Activated naive CD4-positive, alpha-beta T cell treated with anti-CD3 and anti-CD28 coated beads for 36 hours (primary cell): ENCODE measurements at regions of chr9 and their contacts with region 1.

Region 1: DNA sequence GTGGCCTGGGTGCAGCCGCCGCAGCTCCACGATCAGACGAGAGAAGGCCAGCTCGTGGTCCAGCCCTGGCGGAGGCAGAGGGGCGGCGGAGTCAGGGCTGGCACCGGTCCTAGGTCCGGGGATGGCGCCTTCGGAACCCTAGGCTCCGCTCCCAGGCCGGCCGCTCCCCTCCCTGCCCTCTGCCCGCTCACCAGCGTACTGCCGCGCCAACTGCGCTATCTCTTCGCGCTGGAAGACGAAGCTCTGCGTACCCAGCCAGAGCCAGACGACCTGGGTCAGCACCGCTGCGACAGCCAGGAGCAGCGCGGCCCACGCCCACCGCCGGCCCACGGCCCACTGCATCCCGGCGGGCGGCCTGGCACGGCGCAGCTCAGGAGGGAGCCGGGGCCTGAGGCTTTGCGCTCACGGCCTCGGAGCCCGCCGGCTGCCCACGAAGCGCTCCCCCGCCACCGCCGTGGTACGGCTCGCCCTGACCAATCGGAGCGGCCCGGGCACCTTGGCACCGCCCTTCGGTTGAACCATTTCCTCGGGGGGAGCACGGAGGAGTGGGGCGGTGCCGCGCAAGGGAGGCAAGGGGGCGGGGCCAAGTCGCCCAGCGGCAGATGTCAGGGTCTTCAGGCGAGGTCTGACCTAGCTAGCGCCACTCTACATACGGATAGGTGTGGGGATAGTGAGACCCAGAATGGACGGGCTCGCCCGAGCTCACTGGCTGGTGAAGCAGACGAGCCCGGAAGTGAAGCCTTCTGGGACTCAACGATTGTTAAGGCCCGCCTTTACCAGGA is at the start of gene SIGMAR1:
- DNase-seq: peak; percentile 94
- H3K4me3 Mint-ChIP-seq: peak within 1 kb of the TSS; percentile 92
- H3K27ac Mint-ChIP-seq: peak within 1 kb of the TSS; percentile 89
- H3K4me1 Mint-ChIP-seq: peaks cover 37% of the 10 kb centered on the region
- H3K27me3 Mint-ChIP-seq: no peaks in the 10 kb centered on the region
- total RNA-seq, gene SIGMAR1: 58.9 TPM

Region 2: DNA sequence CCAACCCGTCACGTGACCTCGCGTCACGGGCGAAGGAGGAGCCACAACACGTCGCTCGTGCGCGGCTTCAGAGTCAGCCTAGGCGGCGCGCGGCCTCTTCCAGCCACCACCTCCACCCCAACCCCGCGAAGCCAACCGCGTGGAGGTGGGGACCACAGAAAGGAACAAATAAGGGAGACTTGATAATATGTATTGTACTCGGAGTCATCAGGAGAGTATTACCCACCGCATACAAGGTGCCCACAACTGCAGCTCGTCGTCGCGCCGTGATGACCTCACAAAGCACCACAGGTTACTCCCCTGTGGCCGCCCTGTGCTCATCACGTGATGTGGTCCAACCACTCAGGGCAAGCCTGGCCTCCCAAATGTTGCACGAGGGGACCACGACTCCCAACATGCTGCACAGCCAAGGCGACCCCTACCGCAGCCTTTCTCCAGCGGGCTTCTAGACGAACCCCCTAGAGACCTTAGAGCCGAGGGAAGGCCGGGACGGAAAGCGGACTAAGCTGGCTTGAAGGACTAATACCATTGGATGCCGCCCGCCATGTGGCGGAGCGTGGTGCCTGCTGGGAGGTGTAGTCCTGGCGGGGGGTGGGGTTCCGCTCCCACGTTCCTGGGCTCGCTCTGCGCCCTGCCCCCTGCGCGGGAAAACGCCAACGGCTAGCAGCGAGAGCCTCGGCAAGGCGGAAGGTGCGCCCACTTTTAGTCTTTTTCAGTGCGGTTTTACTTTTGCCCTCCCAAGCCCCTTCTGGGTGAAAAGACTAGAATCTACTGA is 588.4 kb before region 1 on chr9:
- CTCF ChIA-PET with region 1: no interaction called
- intact Hi-C with region 1: loop called (anchors 10 kb)
- DNase-seq: peak; percentile 98
- H3K4me3 Mint-ChIP-seq: peak overlapping the region; percentile 91
- H3K27ac Mint-ChIP-seq: peak overlapping the region; percentile 98
- H3K4me1 Mint-ChIP-seq: peaks cover 33% of the 10 kb centered on the region
- H3K27me3 Mint-ChIP-seq: no peaks in the 10 kb centered on the region

Region 3: GRCh38 chr9:34151398-34151797 is 486.1 kb before region 1 on chr9:
- CTCF ChIA-PET with region 1: no interaction called
- intact Hi-C with region 1: no loop called
- DNase-seq: no peak
- H3K4me3 Mint-ChIP-seq: no peak overlapping the region
- H3K27ac Mint-ChIP-seq: no peak overlapping the region
- H3K4me1 Mint-ChIP-seq: no peaks in the 10 kb centered on the region
- H3K27me3 Mint-ChIP-seq: no peaks in the 10 kb centered on the region

Region 4: GRCh38 chr9:34328987-34329832 is 308.3 kb before region 1 on chr9 and contains the starts of genes KIF24 and NUDT2:
- CTCF ChIA-PET with region 1: interaction called, 3 read pairs
- intact Hi-C with region 1: loop called (anchors 5 kb)
- DNase-seq: peak; percentile 98
- H3K4me3 Mint-ChIP-seq: peak within 1 kb of the TSS; percentile 88
- H3K27ac Mint-ChIP-seq: peak within 1 kb of the TSS; percentile 94
- H3K4me1 Mint-ChIP-seq: peaks cover 42% of the 10 kb centered on the region
- H3K27me3 Mint-ChIP-seq: no peaks in the 10 kb centered on the region
- total RNA-seq, gene KIF24: 4.2 to 4.5 TPM
- total RNA-seq, gene NUDT2: 39.2 to 42.9 TPM

Region 5: DNA sequence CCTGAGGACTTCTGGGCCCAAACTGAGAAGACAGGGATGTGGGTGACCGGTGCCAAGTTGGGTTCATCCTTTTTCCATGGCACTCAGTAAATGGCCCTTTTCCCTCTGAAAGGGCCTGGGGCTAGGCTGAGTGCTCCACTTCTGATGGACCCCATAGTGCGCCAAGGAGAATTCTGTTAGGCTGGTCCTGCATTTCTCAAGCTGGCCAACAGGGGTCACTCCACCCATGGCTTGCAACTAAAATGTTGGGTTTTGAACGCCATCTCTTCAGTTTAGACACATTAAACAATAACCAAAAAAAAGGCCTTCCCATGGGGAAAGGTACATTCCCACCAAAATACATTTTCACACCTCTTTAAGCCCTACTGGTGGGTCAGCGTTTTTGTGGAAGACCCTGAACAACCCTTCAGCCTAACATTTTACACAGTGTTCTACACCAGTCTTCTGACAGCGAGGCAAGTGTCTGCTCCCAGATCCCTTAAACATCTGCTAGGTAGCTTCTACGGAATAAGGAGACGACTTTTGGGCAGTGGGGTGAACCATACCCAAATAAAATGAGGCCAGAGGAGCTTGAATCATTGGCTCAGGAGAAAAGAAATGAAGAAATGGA is 75.3 kb before region 1 on chr9:
- CTCF ChIA-PET with region 1: interaction called, 13 read pairs
- intact Hi-C with region 1: no loop called
- DNase-seq: peak; percentile 50
- H3K4me3 Mint-ChIP-seq: no peak overlapping the region
- H3K27ac Mint-ChIP-seq: no peak overlapping the region
- H3K4me1 Mint-ChIP-seq: no peaks in the 10 kb centered on the region
- H3K27me3 Mint-ChIP-seq: peaks cover 23% of the 10 kb centered on the region

Region 6: DNA sequence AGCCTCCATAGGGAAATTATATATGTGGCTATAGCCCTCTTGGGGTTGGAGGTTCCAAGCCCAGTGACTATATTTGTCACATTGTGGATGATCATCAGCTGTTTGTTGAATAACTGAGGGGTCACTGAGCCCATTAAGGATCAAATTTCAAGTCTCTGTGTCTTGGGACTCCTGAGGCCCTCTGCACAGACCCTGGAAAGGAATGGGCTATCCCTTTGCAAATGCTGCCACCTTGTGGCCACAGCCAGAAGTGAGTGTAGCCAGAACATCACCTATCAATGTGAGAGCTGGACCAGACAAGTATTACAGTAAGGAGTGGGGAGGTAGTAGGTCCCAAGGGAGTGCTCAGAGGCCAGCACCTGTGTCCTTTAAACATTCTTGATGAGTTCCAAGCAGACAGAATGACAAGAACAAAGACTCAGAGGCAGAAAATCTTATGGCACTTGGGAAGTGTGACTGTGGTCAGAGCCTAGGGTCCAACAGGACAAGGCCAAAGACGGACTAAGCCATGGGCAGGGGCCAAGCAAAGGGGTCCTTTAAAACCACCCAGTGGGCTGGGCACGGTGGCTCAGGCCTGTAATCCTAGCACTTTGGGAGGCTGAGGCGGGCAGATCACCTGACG is 33.8 kb before region 1 on chr9:
- CTCF ChIA-PET with region 1: interaction called, 64 read pairs
- intact Hi-C with region 1: no loop called
- DNase-seq: peak; percentile 89
- H3K4me3 Mint-ChIP-seq: no peak overlapping the region
- H3K27ac Mint-ChIP-seq: no peak overlapping the region
- H3K4me1 Mint-ChIP-seq: no peaks in the 10 kb centered on the region
- H3K27me3 Mint-ChIP-seq: no peaks in the 10 kb centered on the region

Region 7: DNA sequence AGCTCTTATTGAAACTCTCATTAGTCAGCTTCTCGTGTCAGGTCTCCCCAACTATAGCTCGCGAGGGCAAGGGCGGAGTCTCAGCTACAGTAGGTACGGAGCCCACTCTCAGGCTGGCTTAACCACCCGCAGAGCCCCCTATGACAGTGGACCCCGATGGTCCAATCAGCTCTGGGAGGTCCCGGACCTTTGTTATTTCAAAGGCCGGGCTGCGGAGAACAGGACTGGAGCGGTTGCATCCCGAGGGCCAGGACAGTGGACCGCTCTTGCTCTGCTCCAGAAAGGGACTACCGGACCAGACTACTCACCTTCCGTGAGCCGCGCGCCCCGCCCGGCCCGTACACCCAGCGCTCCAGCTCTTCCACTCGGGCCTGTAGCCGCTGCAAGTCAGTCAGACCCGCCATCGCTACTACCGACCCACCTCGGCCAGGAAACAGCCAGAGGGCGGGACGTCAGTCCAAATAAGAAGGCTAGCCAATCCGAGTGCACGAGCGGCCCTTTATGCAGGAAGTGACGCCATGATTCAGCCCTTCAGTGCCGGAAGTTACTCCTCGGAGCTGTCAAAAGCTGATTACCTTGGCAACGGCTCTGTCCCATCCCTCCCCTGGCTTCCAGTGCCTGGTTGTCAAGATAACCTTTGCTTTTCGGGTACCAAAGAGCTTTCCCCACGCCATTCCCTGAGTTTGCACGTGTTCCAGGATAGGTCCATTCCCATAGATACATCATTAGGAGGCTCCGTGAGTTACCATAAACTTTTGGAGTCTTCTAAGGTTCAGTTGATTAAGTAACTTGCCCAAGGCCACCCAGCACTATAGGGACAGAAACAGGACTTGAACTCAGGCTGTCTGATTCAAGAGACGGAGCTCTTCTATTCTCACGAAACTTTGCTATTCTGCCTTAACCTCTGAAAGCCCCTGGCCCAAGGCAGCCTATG is 17.2 kb before region 1 on chr9 and contains the start of gene DCTN3:
- CTCF ChIA-PET with region 1: interaction called, 123 read pairs
- intact Hi-C with region 1: loop called (anchors 1 kb)
- DNase-seq: peak; percentile 96
- H3K4me3 Mint-ChIP-seq: peak within 1 kb of the TSS; percentile 89
- H3K27ac Mint-ChIP-seq: peak within 1 kb of the TSS; percentile 39
- H3K4me1 Mint-ChIP-seq: peaks cover 21% of the 10 kb centered on the region
- H3K27me3 Mint-ChIP-seq: peaks cover 20% of the 10 kb centered on the region
- total RNA-seq, gene DCTN3: 86.1 to 87.5 TPM

Region 8: DNA sequence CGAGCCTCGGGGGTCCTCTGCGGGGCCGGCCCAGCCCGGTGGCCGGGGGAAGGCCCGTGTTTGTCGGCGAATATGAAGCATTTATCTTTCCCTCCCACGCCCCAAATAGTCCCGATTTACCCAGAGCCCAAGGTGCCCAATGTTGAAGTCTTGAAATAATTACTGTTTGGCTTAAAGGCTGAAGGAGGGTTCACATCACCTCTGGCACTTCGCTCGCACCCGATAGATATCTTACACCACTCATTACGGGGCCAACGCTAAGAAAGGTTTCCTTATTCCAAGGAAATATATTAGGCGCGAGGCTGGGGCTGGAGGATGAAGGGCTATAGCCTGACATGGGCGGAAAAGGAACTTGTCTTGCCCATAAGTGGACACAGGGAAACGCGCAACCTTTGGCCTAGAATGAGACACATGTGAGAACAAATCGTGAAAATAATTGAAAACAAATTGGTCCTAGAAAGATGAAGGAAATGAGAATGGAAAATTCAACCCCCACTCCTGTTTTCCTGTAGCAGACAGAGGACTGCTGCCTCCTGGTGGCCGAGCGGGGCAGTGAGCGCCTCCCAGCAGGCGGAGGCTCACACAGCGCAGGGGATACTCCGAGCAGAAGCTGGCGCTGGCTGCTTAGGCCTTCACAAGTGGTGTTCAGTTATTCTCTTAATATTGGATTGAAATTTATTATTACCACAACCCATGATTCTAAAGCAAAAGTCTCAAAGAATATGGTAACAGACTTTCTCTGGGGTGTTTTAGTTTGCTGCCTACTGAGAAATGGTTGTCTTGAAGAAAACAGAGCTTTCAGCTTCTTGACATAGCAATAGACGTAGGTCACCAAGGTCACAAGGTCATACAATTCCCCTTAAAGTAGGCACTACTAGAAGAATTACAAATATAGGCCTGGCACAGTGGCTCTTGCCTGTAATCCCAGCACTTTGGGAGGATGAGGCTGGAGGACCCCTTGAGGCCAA is 64.5 kb after region 1 on chr9:
- CTCF ChIA-PET with region 1: interaction called, 14 read pairs
- intact Hi-C with region 1: loop called (anchors 1 kb)
- DNase-seq: peak; percentile 90
- H3K4me3 Mint-ChIP-seq: peak overlapping the region; percentile 69
- H3K27ac Mint-ChIP-seq: no peak overlapping the region
- H3K4me1 Mint-ChIP-seq: peaks cover 7% of the 10 kb centered on the region
- H3K27me3 Mint-ChIP-seq: peaks cover 5% of the 10 kb centered on the region